ENCODE measurements at regions of chr2 and their contacts with region 1.

Region 1: GRCh38 chr2:130797493-130798435 is 39.0 kb upstream of the ARHGEF4 start:
- DNase-seq: peak; percentile 92 to 93
- ATAC-seq: peak; percentile 97
- H3K4me3 ChIP-seq: peak overlapping the region; percentile 90
- H3K27ac ChIP-seq: peak overlapping the region; percentile 84
- H3K4me1 ChIP-seq: no peaks in the 10 kb centered on the region
- H3K27me3 ChIP-seq: peaks cover 0 to 4% (median 0%) of the 10 kb centered on the region in 3 donors
- CTCF ChIP-seq: peak; percentile 80

Region 2: GRCh38 chr2:130749641-130750040 is 48.1 kb before region 1 on chr2:
- intact Hi-C with region 1: no loop called
- DNase-seq: no peak
- ATAC-seq: no peak
- H3K4me3 ChIP-seq: no peak overlapping the region
- H3K27ac ChIP-seq: no peak overlapping the region
- H3K4me1 ChIP-seq: no peaks in the 10 kb centered on the region
- H3K27me3 ChIP-seq: peaks cover 0 to 22% (median 4%) of the 10 kb centered on the region in 3 donors
- CTCF ChIP-seq: no peak

Region 3: DNA sequence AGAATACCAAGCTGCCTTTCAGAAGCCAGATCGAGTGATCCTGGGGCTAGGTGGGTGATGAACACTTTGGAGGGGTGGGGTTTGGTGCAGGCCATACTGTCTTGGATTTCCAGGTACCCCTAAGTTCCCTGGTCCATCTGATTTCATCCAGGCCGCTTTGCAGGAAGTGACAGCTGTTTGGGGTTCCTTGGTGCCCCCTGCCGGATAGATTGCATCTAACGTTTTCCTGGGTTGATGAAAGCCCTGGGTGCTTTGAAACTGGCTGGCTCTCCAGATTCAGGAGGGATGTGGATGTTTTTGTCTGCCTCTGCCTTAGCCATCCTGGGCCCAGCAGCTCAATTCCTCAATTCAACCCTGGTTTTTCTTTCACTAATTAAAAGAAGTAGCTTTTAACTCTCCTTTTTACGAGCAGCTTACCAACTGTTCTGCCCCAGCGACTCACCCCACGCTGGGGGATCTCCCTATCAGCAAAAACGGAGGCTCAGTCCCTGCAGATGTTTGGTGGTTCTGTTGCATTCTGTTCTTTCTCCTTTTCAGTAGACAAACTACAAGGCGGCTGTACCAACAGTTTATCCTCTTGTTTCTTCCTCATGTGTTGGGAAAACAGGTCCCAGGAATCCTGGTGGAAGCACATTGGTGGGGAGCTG is 76.1 kb after region 1 on chr2:
- intact Hi-C with region 1: loop called (anchors 2 to 5 kb)
- DNase-seq: peak; percentile 58 to 70
- ATAC-seq: peak in 3 of 4 donors; percentile 55 to 77 (median 63)
- H3K4me3 ChIP-seq: no peak overlapping the region
- H3K27ac ChIP-seq: no peak overlapping the region
- H3K4me1 ChIP-seq: no peaks in the 10 kb centered on the region
- H3K27me3 ChIP-seq: peaks cover 0 to 2% (median 0%) of the 10 kb centered on the region in 3 donors
- CTCF ChIP-seq: peak; percentile 50

Region 4: GRCh38 chr2:130920415-130921163 is 122.8 kb after region 1 on chr2:
- intact Hi-C with region 1: loop called in 1 of 2 experiments (anchors 2 kb)
- DNase-seq: peak in 1 of 2 donors; percentile 47
- ATAC-seq: no peak
- H3K4me3 ChIP-seq: no peak overlapping the region
- H3K27ac ChIP-seq: no peak overlapping the region
- H3K4me1 ChIP-seq: no peaks in the 10 kb centered on the region
- H3K27me3 ChIP-seq: peaks cover 0 to 21% (median 13%) of the 10 kb centered on the region in 3 donors
- CTCF ChIP-seq: peak; percentile 48

Region 5: GRCh38 chr2:130963849-130964793 is 166.4 kb after region 1 on chr2:
- intact Hi-C with region 1: no loop called
- DNase-seq: peak in 1 of 2 donors; percentile 24
- ATAC-seq: peak; percentile 69 to 80 (median 74)
- H3K4me3 ChIP-seq: peak overlapping the region; percentile 61
- H3K27ac ChIP-seq: no peak overlapping the region
- H3K4me1 ChIP-seq: peaks cover 4% of the 10 kb centered on the region
- H3K27me3 ChIP-seq: peaks cover 0 to 75% (median 12%) of the 10 kb centered on the region in 3 donors
- CTCF ChIP-seq: peak; percentile 45

Region 6: GRCh38 chr2:131145040-131145439 is 347.3 kb after region 1 on chr2:
- intact Hi-C with region 1: loop called (anchors 5 to 10 kb)
- DNase-seq: no peak
- ATAC-seq: no peak
- H3K4me3 ChIP-seq: no peak overlapping the region
- H3K27ac ChIP-seq: no peak overlapping the region
- H3K4me1 ChIP-seq: no peaks in the 10 kb centered on the region
- H3K27me3 ChIP-seq: no peaks in the 10 kb centered on the region
- CTCF ChIP-seq: no peak

Region 7: DNA sequence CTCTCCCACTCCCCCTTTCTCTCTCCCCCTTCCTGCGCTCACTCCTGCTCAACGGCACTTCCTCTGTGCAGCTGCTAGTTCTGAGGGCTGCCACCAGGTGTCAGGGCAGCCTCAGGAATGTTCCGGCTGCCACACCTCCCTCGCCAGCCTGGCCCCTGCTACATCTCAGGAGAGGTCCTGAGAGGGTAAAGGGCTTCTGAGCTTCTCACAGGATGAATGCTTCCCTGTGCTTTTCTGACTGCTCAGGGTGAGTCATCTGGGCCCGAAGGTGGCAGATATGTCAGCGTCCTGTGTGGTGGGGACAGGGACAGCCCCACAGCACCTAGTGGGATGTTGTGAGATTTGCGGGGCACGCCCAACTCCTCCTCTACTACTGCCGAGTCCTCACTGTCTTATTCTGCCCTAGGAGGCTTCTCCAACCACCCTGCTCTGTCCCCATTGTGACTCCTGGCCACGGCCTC is 356.3 kb after region 1 on chr2:
- intact Hi-C with region 1: loop called (anchors 5 to 10 kb)
- DNase-seq: peak; percentile 34 to 72
- ATAC-seq: peak; percentile 80 to 92 (median 84)
- H3K4me3 ChIP-seq: no peak overlapping the region
- H3K27ac ChIP-seq: no peak overlapping the region
- H3K4me1 ChIP-seq: no peaks in the 10 kb centered on the region
- H3K27me3 ChIP-seq: no peaks in the 10 kb centered on the region
- CTCF ChIP-seq: peak; percentile 76

Measured in psoas muscle (tissue), 8 donors.